ENCODE measurements at regions of chr14 and their contacts with region 1.

Region 1: GRCh38 chr14:70622111-70622712 is 19.5 kb upstream of the TTC9 start:
- DNase-seq: no peak

Region 2: DNA sequence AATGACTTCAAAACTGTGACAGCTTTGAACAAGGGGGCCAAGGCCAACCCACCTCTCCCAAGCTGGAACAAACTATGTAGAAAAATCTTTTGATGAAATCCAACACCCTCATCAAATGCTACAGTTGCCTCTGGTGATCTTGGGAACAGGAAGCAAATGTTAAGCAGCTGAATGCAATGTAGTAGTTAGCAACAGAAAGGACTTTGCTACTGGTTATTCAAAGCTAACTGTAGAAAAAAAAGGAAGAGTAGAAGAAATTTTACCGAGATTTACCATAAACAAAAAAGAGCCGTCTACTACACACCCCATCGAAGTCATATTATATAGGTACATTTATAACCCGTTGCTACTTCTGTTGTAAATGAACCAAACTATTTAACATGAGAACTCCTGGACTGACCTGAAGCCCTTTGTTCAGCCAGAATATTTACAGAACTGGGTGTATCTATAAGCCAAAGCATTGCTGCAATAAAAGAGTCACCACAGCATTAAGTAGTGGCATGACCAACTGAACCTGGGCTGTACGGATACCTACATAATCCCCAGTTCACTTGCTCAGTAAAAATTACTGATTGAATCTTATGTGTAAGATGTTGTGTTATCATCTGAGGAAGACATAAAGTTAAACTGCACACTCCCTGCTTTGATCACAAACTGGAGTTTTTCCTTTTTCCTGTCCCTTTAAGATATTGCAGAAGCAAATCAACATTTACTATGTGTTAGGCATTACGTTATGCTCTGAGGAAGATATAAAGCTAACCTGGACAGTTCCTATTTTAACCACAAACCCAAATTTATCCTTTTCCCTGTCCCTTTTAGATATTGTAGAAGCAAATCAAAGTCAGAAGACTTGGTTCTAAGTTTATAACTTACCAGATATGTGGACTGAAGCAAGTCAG is 230.5 kb before region 1 on chr14:
- intact Hi-C with region 1: no loop called
- DNase-seq: no peak

Region 3: GRCh38 chr14:70670992-70671651 is 48.9 kb after region 1 on chr14:
- intact Hi-C with region 1: no loop called
- DNase-seq: no peak

Region 4: DNA sequence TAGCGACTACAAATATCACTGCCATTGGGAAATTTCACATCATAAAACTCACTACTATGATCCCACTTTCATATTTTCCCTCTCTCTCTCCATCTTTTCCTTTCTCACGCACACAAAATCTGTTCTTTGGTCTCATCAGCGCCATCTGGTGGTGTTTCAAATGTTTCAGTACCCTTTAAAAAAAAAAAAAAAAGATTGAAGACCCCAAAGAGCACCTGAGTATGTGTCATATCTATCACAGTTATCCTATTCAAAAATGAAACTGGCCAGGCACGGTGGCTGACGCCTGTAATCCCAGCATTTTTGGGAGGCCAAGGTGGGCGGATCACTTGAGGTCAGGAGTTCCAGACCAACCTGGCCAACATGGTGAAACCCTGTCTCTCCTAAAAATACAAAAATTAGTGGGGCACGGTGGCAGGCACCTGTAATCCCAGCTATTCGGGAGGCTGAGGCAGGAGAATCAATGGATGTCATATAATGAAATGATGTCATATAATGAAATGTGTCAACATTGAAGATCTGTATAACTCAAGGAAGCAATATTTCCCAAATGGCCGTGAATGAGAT is 91.9 kb after region 1 on chr14:
- intact Hi-C with region 1: loop called (anchors 2 kb)
- DNase-seq: no peak

Region 5: GRCh38 chr14:70809543-70810244 is 187.5 kb after region 1 on chr14:
- intact Hi-C with region 1: loop called (anchors 5 kb)
- DNase-seq: peak; percentile 90

Region 6: GRCh38 chr14:70972107-70972976 is 350.1 kb after region 1 on chr14:
- intact Hi-C with region 1: loop called (anchors 10 kb)
- DNase-seq: peak; percentile 83